Right cardiac atrium (tissue), 5 donors: ENCODE measurements at regions of chr22 and their contacts with region 1.

Region 1: GRCh38 chr22:41800348-41801146 is at the start of gene CCDC134:
- DNase-seq: peak; percentile 94 to 98 (median 98)
- ATAC-seq: peak; percentile 99
- H3K4me3 ChIP-seq: peak within 1 kb of the TSS; percentile 82
- H3K27ac ChIP-seq: peak within 1 kb of the TSS; percentile 80
- H3K4me1 ChIP-seq: peaks cover 8% of the 10 kb centered on the region
- H3K27me3 ChIP-seq: no peaks in the 10 kb centered on the region
- total RNA-seq, gene CCDC134: 4.1 to 6.6 (median 5.1) TPM

Region 2: GRCh38 chr22:41713004-41713403 is 87.5 kb before region 1 on chr22:
- intact Hi-C with region 1: no loop called
- DNase-seq: no peak
- ATAC-seq: no peak
- H3K4me3 ChIP-seq: no peak overlapping the region
- H3K27ac ChIP-seq: no peak overlapping the region
- H3K4me1 ChIP-seq: no peaks in the 10 kb centered on the region
- H3K27me3 ChIP-seq: no peaks in the 10 kb centered on the region

Region 3: DNA sequence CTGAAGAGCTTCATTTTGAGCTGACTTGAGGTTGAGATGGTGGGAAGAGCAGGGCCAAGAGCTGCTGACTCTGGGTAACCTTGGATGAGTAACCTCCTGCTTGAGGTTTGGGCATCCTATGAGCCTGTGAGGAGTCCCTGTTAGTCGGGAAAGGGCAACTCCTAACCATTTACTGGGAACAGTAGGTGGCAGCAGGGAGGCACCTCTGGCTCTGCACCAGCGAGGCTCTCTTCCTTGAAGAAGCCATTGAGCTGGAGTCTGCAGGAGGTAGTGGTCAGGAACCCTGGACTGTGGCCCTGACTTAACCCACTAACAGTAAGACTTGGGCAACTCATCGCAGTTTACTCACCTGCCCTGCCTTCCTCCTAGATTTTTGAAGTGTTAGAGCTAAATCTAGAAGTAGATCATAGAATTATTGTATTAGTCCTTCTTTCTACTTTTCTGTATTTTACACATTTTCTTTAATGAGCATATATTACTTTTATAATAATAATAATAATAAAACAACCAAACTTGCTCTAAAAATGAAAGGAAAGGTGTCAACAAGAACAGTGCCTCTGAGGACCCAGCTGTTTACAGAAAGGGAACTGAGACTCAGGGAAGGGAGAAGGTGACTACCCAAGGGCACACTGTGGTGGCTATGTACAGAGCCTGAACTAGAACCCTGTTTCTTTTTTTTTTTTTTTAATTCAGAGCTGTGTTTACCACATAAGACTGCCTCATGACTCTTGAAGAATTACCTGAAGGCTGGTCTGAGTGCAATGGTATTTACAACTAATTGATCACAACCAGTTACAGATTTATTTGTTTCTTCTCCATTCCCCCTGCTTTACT is 53.8 kb before region 1 on chr22:
- intact Hi-C with region 1: loop called in 1 of 4 experiments (anchors 10 kb)
- DNase-seq: peak; percentile 63 to 82 (median 75)
- ATAC-seq: peak; percentile 87 to 91
- H3K4me3 ChIP-seq: no peak overlapping the region
- H3K27ac ChIP-seq: no peak overlapping the region
- H3K4me1 ChIP-seq: no peaks in the 10 kb centered on the region
- H3K27me3 ChIP-seq: no peaks in the 10 kb centered on the region

Region 4: DNA sequence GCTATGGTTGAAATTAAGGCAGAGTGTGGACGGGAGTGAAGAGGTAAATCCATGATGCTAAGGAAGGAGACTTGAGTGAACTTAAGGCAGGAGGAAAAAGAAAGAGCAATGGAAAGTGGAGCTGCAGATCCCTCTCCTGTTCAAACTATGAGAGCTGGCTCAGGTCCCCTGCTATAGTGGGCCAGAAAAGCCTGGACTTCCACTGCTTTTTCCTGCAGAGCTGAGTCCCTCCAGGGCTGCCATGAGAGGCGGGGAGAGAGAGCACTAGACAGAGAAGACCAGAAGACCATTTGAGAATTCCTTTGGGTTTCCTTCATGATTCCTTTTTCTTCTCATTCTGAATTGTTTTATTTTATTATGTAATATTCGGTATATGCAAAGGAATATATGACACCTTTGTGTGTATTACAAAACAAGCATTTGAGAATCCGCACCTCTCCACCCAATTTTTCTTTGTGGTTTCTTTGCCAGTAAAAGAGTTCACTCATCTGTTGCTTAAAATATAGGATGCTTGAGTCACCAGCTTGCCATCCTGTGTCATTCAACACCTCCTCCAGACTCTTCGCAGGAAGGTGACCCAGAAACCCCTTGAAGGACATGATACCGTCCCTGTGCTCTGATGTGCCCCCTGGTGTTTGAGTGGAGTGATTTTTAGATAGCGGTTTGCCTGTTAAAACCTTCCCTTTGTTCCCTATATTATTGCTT is 56.8 kb after region 1 on chr22:
- intact Hi-C with region 1: no loop called
- DNase-seq: peak in 2 of 3 donors; percentile 25 to 63
- ATAC-seq: peak; percentile 53 to 72
- H3K4me3 ChIP-seq: no peak overlapping the region
- H3K27ac ChIP-seq: peak overlapping the region; percentile 88
- H3K4me1 ChIP-seq: peaks cover 13% of the 10 kb centered on the region
- H3K27me3 ChIP-seq: no peaks in the 10 kb centered on the region

Region 5: DNA sequence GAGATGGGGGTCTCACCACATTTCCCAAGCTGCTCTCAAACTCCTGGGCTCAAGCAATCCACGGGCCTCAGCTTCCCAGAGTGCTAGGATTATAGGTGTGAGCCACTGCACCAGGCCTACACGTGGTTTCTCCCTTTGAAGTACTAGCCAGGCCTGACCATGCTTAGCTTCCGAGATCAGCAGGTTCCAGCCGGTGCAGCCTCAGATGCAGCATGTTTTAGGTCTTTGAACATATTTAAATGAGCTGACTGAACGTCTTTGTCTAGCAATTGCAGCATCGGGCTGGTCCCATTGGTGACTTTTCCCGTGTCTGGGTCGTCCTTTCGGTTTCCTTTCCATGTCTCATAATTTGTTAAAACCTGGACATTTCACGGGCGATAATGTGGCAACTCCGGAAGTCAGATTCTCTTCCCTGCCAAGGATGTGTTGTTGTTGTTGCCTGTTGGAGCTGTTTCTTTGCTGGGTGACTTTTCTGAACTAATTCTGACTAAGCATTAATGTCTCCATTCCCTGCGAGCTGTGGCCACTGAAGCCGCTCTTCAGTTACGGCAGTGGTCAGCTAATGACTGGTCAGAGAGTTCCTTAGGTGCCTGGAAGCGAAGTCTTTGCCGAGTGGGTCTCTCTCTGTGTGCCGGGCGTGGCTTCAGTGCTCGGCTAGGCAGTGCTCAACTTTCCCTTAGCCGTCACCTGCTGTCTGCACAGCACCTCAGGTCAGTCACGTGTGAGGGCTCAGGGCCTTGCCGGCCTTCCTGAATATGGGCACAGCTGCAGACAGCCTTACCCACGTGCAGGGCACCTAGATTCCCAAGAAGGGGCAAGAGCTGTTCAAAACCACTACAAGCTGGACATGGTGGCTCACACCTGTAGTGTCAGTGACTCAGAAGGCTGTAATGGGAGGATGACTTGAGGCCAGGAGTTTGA is 333.8 kb after region 1 on chr22:
- intact Hi-C with region 1: no loop called
- DNase-seq: no peak
- ATAC-seq: no peak
- H3K4me3 ChIP-seq: no peak overlapping the region
- H3K27ac ChIP-seq: no peak overlapping the region
- H3K4me1 ChIP-seq: no peaks in the 10 kb centered on the region
- H3K27me3 ChIP-seq: no peaks in the 10 kb centered on the region